Lower leg skin (tissue), 4 donors: ENCODE measurements at regions of chr18 and their contacts with region 1.

Region 1: DNA sequence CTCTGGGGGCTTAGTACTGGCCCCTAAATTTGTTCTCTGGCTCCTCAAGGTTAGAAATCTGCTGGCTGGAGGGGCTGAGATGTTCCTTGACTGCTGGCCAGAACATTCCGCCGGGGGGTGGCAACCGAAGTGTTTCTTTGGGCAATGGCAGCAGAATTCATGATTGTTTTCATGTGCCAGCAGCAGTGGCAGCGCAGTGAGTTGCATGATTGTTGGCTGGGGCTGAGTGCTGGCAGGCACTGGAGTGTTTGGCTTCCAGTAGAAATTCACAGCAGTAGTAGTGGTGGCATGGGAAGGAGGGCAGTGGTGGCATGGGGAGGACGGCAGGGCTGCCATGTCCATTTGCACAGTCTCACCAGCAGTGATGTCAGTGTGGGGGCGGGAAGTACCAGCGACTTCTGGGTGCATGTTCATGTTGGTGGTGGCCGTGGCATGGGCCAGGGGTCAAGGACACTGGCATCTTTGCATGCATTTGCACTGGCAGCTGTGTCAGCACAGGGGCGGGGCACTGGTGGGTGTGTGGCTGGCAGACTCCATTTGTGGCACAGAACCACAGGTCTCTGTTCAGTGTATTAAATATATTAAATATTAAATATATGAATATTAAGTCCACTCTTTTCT is 130.6 kb upstream of the CDH7 start:
- DNase-seq: no peak
- H3K4me3 ChIP-seq: no peak overlapping the region
- CTCF ChIP-seq: no peak
- POLR2A ChIP-seq: no peak

Region 2: GRCh38 chr18:65601775-65602174 is 18.4 kb before region 1 on chr18:
- intact Hi-C with region 1: loop called (anchors 1 kb)
- DNase-seq: no peak
- H3K4me3 ChIP-seq: no peak overlapping the region
- CTCF ChIP-seq: no peak
- POLR2A ChIP-seq: no peak

Region 3: DNA sequence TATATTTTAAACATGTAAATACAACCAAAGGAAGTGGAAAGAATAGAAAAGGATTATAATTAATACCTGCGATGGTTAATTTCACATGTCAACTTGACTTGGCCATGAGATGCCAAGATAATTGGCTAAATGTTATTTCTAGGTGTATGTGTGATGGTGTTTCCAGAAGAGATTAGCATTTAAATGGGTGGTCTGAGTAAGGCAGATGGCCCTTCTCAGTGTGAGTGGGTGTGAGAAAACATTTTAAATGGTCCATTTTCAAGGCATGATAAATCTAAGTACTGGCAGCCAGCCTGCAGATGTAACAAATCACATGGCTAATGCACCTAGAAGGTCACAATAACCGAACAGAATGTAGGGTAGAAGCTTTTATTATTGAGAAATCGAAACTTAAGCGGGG is 31.0 kb after region 1 on chr18:
- intact Hi-C with region 1: no loop called
- DNase-seq: no peak
- H3K4me3 ChIP-seq: no peak overlapping the region
- CTCF ChIP-seq: no peak
- POLR2A ChIP-seq: no peak